ENCODE measurements at regions of chr9 and their contacts with region 1.

Region 1: DNA sequence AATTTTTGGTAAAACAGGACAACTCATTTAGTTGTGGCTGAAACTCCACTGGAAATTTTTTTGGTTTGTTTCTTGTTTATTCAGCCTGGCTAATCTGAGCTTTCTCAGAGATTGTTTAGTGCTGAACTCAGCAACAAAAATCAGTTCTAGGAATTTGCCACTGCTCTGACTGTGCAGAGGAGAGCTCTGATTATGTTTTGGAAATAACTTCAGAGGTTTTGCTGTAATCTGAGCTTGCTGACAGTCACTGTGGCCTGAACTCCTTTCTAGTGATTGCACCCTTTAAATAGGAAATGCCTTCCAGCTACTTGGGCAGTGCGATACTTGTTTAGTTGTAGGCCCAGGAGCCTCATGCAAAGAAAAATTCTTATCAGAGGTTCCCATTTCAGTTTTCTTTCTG is 60.2 kb downstream of the OSTF1 start:
- DNase-seq: peak; percentile 56
- H3K4me3 Mint-ChIP-seq: peak overlapping the region; percentile 9
- H3K27ac Mint-ChIP-seq: peak overlapping the region; percentile 91
- H3K4me1 Mint-ChIP-seq: peaks cover 88% of the 10 kb centered on the region
- H3K27me3 Mint-ChIP-seq: no peaks in the 10 kb centered on the region

Region 2: DNA sequence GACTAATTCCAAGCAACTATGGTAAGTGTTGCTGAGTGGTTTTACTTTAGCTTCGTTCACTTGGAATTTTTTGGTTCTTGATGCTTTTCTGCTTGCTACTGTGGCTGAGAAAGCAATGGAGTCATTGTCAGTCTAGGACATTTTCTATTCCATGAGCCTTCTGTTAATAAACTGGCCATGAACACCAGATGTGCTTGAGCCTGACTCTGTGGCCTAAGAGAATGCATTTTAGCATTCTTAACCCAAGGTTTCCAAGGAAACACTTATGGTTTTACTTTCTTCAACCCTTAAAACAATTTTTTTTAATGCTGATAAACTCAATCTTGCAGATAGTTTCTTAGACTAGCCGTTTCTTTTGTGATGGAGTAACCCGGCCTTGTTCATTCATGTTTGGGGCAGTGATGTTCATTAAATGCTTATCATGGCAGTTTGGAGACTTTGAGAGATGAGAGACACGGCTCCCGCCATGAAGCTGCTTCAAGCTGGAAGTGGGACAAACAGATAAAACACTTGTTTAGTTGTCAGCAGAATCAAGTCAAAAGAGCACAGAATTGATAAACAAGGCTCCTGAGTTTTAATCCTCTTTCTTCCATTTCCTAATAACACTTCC is 17.8 kb before region 1 on chr9:
- CTCF ChIA-PET with region 1: interaction called, 6 read pairs
- POLR2A ChIA-PET with region 1: interaction called, 10 read pairs
- DNase-seq: no peak
- H3K4me3 Mint-ChIP-seq: no peak overlapping the region
- H3K27ac Mint-ChIP-seq: no peak overlapping the region
- H3K4me1 Mint-ChIP-seq: peaks cover 58% of the 10 kb centered on the region
- H3K27me3 Mint-ChIP-seq: no peaks in the 10 kb centered on the region

Region 3: GRCh38 chr9:75170898-75171360 is 22.4 kb after region 1 on chr9:
- CTCF ChIA-PET with region 1: interaction called, 9 read pairs
- POLR2A ChIA-PET with region 1: interaction called, 48 read pairs
- DNase-seq: no peak
- H3K4me3 Mint-ChIP-seq: no peak overlapping the region
- H3K27ac Mint-ChIP-seq: peak overlapping the region; percentile 59
- H3K4me1 Mint-ChIP-seq: peaks cover 66% of the 10 kb centered on the region
- H3K27me3 Mint-ChIP-seq: no peaks in the 10 kb centered on the region